ENCODE measurements at regions of chr9 and their contacts with region 1.

Region 1: GRCh38 chr9:86948074-86948929 is 996 bp upstream of the GAS1 start:
- DNase-seq: peak in 1 of 2 donors; percentile 87
- H3K4me3 ChIP-seq: peak overlapping the region; percentile 90 to 93
- H3K27ac ChIP-seq: peak overlapping the region; percentile 88 to 89
- H3K4me1 ChIP-seq: peaks cover 0 to 17% of the 10 kb centered on the region in 2 donors
- H3K27me3 ChIP-seq: no peaks in the 10 kb centered on the region
- CTCF ChIP-seq: peak; percentile 75 to 93 (median 92)

Region 2: DNA sequence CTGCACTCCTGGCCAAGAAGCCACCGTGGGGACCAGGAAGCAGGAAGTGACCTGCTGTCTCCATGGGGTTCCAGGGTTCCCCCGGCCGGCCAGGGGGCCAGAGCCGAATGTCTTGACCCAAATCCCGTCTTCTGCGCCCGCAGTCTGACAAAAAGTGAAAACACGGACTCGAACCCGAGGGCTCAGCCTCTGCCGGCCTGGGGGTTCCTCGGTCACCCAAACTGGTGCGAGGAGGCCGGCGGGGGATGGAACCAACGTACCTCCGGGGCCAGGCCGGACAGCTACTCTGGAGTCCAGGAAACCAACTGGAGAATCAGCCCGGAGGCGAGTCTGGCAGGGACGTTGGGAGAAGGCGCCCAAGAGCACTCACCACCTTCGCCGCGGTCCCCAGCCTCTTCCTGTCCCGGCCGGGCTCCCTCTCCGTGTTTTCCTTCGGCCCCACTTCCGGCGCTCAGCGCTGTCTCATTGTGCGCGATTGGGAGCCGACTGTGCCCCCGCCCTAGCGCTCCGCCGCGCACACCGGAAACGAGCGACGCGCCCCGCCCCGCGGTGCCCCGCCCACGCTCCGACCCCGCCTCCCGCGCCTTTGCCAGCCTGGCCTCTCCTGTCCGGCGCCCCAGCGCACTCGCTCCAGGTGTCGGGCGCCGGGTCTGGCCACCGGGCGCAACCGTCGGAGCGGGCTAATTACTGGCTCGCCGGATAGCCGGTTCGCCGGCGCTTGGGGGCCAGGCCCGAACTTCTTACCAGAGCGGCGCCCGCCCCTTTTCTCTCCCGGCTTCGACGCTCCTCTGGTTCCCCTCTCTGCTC is 594.1 kb before region 1 on chr9 and contains the start of gene TUT7:
- intact Hi-C with region 1: loop called (anchors 5 kb)
- DNase-seq: peak; percentile 81 to 97
- H3K4me3 ChIP-seq: peak within 1 kb of the TSS; percentile 93 to 99
- H3K27ac ChIP-seq: peak within 1 kb of the TSS; percentile 97 to 100
- H3K4me1 ChIP-seq: peaks cover 3 to 16% of the 10 kb centered on the region in 2 donors
- H3K27me3 ChIP-seq: no peaks in the 10 kb centered on the region
- CTCF ChIP-seq: no peak
- total RNA-seq, gene TUT7: 12.9 TPM

Region 3: DNA sequence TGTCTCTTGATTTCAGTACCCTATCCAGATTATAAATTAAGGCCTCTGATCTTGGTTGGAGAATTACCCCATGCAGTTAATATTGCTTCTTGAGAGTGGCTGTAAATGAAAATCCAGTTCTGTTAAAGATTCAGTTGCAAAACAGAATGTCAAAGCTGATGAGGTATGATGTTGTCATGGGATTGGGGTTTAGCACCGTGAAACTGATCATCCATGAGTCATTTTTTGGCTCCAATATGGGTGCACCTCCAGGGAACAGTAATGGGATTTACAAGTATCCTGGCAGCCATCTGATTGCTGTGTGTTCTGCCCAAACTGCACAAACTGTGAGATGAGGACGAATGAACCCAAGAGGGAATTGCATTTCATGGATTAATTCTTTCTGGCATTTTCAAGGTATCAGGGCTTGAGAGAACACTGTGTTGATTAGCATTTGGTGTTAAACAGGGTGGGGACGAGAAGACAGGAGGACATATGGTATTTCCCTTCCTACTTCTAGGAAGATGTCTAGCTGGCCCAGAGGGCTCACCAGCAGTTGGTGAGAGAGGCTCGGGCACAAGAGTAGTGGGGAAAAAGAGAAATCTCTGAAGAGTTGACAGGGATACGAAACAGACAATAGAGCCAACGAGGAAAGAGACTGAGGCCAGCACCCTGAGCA is 215.7 kb before region 1 on chr9:
- intact Hi-C with region 1: loop called (anchors 5 kb)
- DNase-seq: peak in 1 of 2 donors; percentile 74
- H3K4me3 ChIP-seq: no peak overlapping the region
- H3K27ac ChIP-seq: peak overlapping the region; percentile 30 to 60
- H3K4me1 ChIP-seq: peaks cover 0 to 5% of the 10 kb centered on the region in 2 donors
- H3K27me3 ChIP-seq: no peaks in the 10 kb centered on the region
- CTCF ChIP-seq: no peak

Region 4: GRCh38 chr9:87039809-87040392 is 91.6 kb after region 1 on chr9:
- intact Hi-C with region 1: loop called (anchors 5 kb)
- DNase-seq: no peak
- H3K4me3 ChIP-seq: no peak overlapping the region
- H3K27ac ChIP-seq: no peak overlapping the region
- H3K4me1 ChIP-seq: peaks cover 0 to 4% of the 10 kb centered on the region in 2 donors
- H3K27me3 ChIP-seq: no peaks in the 10 kb centered on the region
- CTCF ChIP-seq: no peak

Region 5: DNA sequence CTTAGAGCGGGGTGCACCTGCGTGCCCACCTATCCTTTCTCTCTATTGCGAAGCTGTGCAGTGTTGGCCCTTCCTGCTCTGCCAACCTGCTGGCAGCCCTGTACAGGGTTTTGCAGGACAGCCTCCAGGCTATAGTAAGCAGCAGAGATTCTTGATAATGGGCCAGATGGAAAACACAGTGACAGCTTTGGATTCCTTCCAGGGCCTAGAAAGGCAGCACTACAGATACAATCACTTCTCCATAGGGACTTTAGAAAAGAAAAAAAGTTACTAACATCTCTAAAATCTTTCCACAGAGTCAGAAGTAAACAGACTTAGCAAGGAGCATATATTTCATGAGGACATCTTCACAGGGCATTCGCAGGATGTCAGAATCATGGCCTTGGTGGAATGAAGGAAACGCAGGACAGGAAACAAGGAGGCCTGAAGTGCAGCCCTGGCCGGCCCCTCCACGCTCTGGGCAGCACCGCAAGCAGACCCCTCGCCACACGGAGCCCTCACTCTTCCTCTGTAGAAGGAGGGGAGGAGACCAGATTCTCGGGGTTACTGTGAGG is 171.1 kb after region 1 on chr9:
- intact Hi-C with region 1: loop called (anchors 5 kb)
- DNase-seq: peak in 1 of 2 donors; percentile 76
- H3K4me3 ChIP-seq: no peak overlapping the region
- H3K27ac ChIP-seq: peak overlapping the region; percentile 2 to 53
- H3K4me1 ChIP-seq: peaks cover 3 to 30% of the 10 kb centered on the region in 2 donors
- H3K27me3 ChIP-seq: no peaks in the 10 kb centered on the region
- CTCF ChIP-seq: no peak

Region 6: GRCh38 chr9:87270221-87270847 is 322.0 kb after region 1 on chr9:
- intact Hi-C with region 1: loop called (anchors 2 kb)
- DNase-seq: no peak
- H3K4me3 ChIP-seq: no peak overlapping the region
- H3K27ac ChIP-seq: peak overlapping the region; percentile 47 to 79
- H3K4me1 ChIP-seq: peaks cover 4 to 34% of the 10 kb centered on the region in 2 donors
- H3K27me3 ChIP-seq: no peaks in the 10 kb centered on the region
- CTCF ChIP-seq: no peak

Measured in ascending aorta (tissue), 2 donors.